ENCODE measurements at regions of chr2 and their contacts with region 1.

Region 1: DNA sequence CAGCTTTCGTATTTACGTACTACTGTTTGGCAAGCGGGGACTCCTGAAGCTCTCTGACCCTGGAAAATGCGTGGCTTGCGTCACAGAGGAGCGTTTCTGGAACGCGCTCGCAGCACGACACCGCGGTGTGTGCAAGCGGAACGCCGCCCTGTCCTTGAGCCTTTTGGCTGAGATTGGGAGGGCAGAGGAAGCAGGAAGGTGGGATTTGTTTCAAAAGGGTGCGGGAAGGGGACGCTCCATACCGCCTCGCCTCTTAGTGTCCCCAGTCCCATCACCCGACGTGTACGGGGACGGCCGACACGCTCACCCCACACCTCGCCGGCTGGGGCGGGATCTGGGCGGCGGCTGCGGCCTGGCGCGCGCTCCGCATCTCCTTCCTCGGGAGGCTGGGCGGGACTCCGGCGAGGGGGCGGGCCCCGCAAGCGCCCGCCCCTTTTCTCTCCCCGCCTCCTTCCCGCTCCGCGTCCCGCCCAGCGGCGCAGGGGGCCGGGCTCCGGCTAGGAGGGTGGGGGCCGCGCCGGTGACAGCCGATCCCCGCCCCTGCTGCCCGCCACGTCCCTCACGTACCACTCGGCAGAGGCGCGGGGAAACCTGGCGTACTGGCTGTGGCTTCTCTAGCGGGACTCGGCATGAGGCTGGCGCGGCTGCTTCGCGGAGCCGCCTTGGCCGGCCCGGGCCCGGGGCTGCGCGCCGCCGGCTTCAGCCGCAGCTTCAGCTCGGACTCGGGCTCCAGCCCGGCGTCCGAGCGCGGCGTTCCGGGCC is at the start of gene PDK1:
- DNase-seq: peak; percentile 91
- H3K4me3 Mint-ChIP-seq: peak within 1 kb of the TSS; percentile 97
- H3K27ac Mint-ChIP-seq: peak within 1 kb of the TSS; percentile 98
- H3K4me1 Mint-ChIP-seq: peaks cover 65% of the 10 kb centered on the region
- H3K27me3 Mint-ChIP-seq: no peaks in the 10 kb centered on the region
- total RNA-seq, gene PDK1: 27.6 and 35.8 TPM in 2 replicates

Region 2: DNA sequence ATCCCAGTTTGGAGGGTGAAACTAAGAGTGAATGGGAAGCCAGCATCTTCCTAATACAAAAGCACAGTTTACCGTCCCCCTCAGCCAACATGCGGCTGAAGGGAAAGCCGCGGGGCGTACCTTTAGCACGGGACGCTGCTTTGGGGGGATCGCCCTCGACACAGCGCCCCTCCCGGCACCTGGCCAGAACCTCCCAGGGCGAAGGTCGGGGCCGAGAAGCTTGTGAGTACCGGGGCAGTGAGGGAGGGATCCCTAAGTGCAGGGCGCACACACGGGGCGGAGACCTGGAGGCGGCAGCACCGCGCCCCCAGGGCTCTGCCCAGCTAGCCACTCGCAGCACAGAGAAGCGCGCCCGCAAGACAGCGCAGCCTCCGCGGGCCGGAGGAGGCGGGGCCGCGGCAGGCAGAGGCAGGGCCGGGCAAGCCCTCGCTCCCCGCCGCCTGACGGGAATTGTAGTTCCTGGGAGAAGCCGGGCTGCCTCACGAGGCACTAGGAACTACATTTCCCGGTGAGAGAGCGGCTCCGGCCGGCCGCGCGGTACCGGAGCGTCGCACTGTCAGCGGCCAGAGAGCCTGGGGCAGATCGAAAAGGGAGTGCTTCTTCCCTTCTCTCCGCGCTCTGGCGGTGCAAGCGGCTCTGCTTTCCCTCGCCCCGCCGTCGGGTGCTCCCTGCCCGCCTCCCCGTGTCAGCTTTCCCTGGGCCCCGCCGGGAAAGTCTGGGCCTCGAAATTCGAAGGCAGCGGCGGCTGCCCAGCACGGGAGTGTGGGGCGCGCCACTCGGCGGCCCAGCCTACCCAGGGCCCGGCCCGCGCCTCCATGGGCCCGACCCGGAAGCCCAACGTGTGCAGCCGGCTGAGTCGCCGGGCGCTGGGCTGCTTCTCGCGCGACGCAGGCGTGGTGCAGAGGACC is 1121.7 kb before region 1 on chr2 and contains the starts of genes DCAF17 and METTL8:
- intact Hi-C with region 1: loop called (anchors 1 kb)
- DNase-seq: peak; percentile 93
- H3K4me3 Mint-ChIP-seq: peak within 1 kb of the TSS; percentile 95
- H3K27ac Mint-ChIP-seq: peak within 1 kb of the TSS; percentile 98
- H3K4me1 Mint-ChIP-seq: peaks cover 28% of the 10 kb centered on the region
- H3K27me3 Mint-ChIP-seq: no peaks in the 10 kb centered on the region
- total RNA-seq, gene DCAF17: 23.9 and 24.9 TPM in 2 replicates
- total RNA-seq, gene METTL8: 31.8 and 36.4 TPM in 2 replicates

Region 3: DNA sequence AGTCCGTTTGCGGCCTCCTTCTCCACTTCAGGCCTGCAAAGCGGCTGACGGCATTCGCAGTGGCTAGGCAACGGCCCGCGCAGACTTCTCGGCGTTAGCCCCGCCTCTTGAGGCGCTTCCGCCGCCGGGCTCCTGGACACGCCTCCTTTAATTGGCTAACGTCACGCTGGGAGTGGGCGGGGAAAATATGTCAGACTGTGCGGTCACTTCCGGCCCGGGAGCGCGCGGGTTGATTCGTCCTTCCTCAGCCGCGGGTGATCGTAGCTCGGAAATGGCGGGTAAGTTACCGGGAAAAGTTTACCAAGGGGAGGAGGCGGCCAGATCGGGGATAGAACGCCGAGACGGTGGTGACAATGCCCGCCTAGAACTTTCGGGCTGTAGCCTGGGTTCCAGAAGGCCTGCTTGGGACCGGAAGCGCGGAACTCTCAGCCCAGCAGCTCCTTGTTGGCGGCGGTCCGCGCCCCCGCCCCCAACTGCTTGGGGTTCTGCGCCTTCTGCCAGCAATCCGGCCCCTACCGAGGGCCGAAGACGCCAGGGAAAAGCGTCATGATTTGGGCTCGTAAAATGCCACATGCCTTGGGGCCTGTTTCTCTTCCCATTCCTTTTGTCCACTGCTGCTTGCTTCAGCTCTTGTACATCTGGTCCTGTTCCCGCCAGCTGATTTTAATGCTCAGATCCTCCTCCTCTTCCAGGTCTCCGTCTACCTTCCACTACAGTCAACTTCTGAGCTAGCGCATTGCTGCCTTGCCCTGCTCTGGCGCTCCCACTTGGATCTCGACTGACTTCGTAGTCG is 633.3 kb before region 1 on chr2 and contains the start of gene HAT1:
- intact Hi-C with region 1: loop called (anchors 1 kb)
- DNase-seq: peak; percentile 97
- H3K4me3 Mint-ChIP-seq: peak within 1 kb of the TSS; percentile 98
- H3K27ac Mint-ChIP-seq: peak within 1 kb of the TSS; percentile 98
- H3K4me1 Mint-ChIP-seq: peaks cover 36% of the 10 kb centered on the region
- H3K27me3 Mint-ChIP-seq: peaks cover 2% of the 10 kb centered on the region
- total RNA-seq, gene HAT1: 68.2 and 73.1 TPM in 2 replicates

Region 4: GRCh38 chr2:172427256-172427989 is 128.3 kb before region 1 on chr2 and contains the start of gene ITGA6:
- intact Hi-C with region 1: loop called (anchors 1 kb)
- DNase-seq: peak; percentile 66
- H3K4me3 Mint-ChIP-seq: peak within 1 kb of the TSS; percentile 85
- H3K27ac Mint-ChIP-seq: peak within 1 kb of the TSS; percentile 70
- H3K4me1 Mint-ChIP-seq: peaks cover 45% of the 10 kb centered on the region
- H3K27me3 Mint-ChIP-seq: peaks cover 34% of the 10 kb centered on the region
- total RNA-seq, gene ITGA6: 1.9 TPM in 2 replicates

Region 5: GRCh38 chr2:172588931-172589330 is 33.2 kb after region 1 on chr2:
- intact Hi-C with region 1: loop called (anchors 1 kb)
- DNase-seq: no peak
- H3K4me3 Mint-ChIP-seq: no peak overlapping the region
- H3K27ac Mint-ChIP-seq: peak overlapping the region; percentile 16
- H3K4me1 Mint-ChIP-seq: peaks cover 26% of the 10 kb centered on the region
- H3K27me3 Mint-ChIP-seq: no peaks in the 10 kb centered on the region

Region 6: GRCh38 chr2:174248187-174248997 is 1692.7 kb after region 1 on chr2 and contains the start of gene OLA1:
- intact Hi-C with region 1: loop called (anchors 2 kb)
- DNase-seq: peak; percentile 95
- H3K4me3 Mint-ChIP-seq: peak within 1 kb of the TSS; percentile 83
- H3K27ac Mint-ChIP-seq: peak within 1 kb of the TSS; percentile 79
- H3K4me1 Mint-ChIP-seq: peaks cover 26% of the 10 kb centered on the region
- H3K27me3 Mint-ChIP-seq: no peaks in the 10 kb centered on the region
- total RNA-seq, gene OLA1: 132 and 139 TPM in 2 replicates